Activated naive CD4-positive, alpha-beta T cell treated with anti-CD3 and anti-CD28 coated beads, Interleukin-2, amount 10 ng/mL, durations not matched to agents 7 days and 5 days (primary cell): ENCODE measurements at regions of chr17 and their contacts with region 1.

Region 1: DNA sequence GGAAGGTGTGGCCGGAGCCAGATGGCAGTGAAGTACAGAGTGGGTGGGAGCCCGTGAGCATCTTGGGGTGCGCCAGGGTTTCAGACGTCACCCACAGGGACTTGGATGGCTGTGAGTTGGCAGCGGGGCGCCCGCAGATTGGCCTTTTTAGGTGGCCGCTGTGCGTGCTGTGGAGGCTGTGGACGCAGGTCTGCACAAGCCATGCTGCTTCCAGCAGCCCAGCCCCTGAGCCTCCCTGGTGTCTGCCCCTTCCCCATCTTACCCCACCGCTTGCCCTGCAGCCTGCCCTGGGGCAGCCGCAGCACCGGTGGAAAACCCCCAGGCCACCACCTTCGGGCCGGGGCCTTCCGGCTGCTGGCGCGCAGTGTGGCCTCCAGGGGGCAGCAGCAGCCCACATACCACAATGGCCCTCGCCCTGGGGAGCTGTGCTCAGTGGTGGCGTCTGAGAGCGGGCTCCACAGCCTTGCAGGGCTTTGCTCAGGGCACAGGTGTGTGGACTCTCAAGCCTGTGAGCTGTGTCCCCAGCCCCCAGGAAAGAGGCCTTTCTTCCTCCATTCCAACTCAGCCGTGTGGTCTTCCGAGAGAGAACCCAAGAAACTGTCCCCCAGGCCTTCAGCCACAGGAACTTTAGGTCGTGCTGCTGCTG is 11.8 kb downstream of the ENDOV start:
- DNase-seq: peak; percentile 90
- H3K4me3 Mint-ChIP-seq: no peak overlapping the region
- H3K27ac Mint-ChIP-seq: no peak overlapping the region
- H3K4me1 Mint-ChIP-seq: peaks cover 21% of the 10 kb centered on the region
- H3K27me3 Mint-ChIP-seq: peaks cover 21% of the 10 kb centered on the region

Region 2: GRCh38 chr17:80575057-80575875 is 148.5 kb after region 1 on chr17:
- CTCF ChIA-PET with region 1: interaction called, 11 read pairs
- DNase-seq: peak; percentile 95
- H3K4me3 Mint-ChIP-seq: no peak overlapping the region
- H3K27ac Mint-ChIP-seq: peak overlapping the region; percentile 56
- H3K4me1 Mint-ChIP-seq: peaks cover 19% of the 10 kb centered on the region
- H3K27me3 Mint-ChIP-seq: no peaks in the 10 kb centered on the region

Region 3: DNA sequence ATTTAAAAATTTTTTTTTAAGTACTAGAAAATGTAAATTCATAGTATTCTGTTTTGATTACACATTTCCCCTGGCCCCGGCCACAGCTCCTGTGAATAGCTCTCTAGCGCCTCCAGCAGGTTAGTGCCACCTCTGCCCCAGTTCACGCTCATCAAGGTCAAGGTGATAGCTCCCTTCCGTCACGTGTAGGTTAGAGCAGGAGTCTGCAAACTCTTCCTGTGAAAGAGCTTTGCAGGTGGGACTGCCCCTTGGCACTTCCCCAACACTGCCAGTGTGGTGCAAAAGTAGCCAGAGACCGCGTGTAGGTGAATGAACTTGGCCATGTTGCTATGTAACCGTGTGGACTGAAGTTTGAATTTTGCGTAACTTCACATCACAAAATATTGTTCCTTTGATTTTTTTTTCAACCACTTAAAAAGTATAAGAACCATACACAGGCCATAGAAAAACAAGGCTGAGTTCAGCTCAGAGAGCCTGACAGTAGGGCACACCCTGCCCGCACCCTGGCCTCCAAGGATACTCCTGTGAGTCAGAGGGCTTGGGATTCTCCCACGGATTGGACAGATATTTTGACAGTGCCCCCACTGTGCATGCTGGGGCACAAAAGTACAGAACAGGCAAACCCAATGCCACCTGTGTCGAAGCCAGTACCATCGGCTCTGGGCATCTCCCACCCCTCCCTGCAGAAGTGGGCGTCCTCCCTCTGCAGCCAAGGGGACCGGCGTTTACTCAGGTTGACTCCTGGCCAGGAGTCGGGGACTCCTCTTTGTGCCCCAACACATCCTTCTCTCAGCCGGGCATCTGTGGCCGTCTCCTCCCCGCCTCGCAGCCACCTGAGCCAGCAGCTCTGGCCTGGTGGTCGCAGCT is 472.8 kb after region 1 on chr17:
- CTCF ChIA-PET with region 1: interaction called, 33 read pairs
- DNase-seq: peak; percentile 91
- H3K4me3 Mint-ChIP-seq: no peak overlapping the region
- H3K27ac Mint-ChIP-seq: peak overlapping the region; percentile 80
- H3K4me1 Mint-ChIP-seq: peaks cover 73% of the 10 kb centered on the region
- H3K27me3 Mint-ChIP-seq: no peaks in the 10 kb centered on the region

Region 4: DNA sequence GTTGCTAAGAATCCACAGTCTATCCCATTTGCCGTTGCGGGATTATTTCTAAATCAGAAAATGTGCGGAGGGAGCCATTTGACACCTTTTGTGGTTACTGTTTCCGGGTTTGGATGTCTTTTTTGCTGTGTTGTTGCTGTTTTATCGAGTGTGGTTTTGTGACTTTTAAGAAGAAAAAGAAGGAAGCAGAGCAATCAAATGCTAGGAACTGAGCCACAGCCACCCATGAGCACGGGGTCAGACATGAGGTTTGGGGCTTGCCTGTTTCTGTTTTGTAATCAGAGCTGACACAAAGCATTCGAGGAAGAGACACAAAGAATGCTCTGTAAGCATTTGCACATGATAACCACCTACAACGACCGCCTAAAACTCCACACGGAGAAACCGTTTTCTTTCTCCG is 511.8 kb after region 1 on chr17:
- CTCF ChIA-PET with region 1: interaction called, 13 read pairs
- DNase-seq: peak; percentile 86
- H3K4me3 Mint-ChIP-seq: peak overlapping the region; percentile 55
- H3K27ac Mint-ChIP-seq: peak overlapping the region; percentile 96
- H3K4me1 Mint-ChIP-seq: peaks cover 45% of the 10 kb centered on the region
- H3K27me3 Mint-ChIP-seq: peaks cover 8% of the 10 kb centered on the region

Region 5: GRCh38 chr17:80970044-80970761 is 543.4 kb after region 1 on chr17:
- CTCF ChIA-PET with region 1: interaction called, 42 read pairs
- DNase-seq: peak; percentile 72
- H3K4me3 Mint-ChIP-seq: no peak overlapping the region
- H3K27ac Mint-ChIP-seq: peak overlapping the region; percentile 24
- H3K4me1 Mint-ChIP-seq: peaks cover 13% of the 10 kb centered on the region
- H3K27me3 Mint-ChIP-seq: peaks cover 38% of the 10 kb centered on the region

Region 6: DNA sequence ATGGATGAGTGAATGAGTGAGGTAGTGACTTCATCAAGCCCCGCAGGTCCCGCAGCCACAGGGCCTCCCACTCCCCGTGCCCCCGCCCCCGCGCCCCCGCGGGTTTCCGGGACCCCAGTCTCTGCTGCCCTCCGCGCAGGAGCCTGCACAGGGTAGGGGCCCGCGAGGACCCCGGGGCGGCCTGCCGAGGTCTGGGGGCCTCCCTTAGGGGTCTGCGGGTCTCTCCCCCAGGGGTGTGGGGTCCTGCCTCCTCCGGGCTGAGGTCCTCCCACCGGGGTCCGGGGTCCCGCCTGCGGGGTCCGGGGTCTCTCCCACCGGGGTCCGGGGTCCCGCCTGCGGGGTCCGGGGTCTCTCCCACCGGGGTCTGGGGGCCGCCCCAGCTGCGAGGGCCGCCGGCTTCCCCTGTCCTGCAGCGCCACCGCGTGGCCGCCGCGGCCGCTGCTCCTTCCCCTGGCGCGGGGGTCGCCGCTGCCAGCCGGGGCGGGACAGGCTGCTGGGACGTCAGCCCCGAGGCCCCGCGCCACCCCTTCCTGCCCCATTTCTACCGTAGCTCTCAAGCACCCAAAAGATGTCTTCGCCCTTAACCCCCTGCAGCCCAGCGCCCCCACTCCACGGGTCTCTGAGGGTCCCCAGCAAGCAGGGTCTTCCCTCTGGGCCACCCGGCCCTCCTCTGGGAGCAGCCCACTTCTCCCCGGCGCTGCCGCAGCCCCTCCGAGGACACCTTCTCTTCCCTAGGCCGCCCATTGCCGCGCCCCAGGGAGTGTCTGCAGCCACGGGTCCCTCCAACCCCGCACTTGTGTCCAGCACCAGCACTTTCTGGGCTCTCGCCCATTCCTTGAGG is 554.5 kb after region 1 on chr17:
- CTCF ChIA-PET with region 1: interaction called, 20 read pairs
- DNase-seq: peak; percentile 53
- H3K4me3 Mint-ChIP-seq: no peak overlapping the region
- H3K27ac Mint-ChIP-seq: no peak overlapping the region
- H3K4me1 Mint-ChIP-seq: peaks cover 8% of the 10 kb centered on the region
- H3K27me3 Mint-ChIP-seq: peaks cover 62% of the 10 kb centered on the region